Dendritic cell treated with granulocyte-macrophage colony-stimulating factor and Interleukin-4, amounts not matched to agents 40 ng/mL and 50 ng/mL, for 4 days (primary cell): ENCODE measurements at regions of chr9 and their contacts with region 1.

Region 1: DNA sequence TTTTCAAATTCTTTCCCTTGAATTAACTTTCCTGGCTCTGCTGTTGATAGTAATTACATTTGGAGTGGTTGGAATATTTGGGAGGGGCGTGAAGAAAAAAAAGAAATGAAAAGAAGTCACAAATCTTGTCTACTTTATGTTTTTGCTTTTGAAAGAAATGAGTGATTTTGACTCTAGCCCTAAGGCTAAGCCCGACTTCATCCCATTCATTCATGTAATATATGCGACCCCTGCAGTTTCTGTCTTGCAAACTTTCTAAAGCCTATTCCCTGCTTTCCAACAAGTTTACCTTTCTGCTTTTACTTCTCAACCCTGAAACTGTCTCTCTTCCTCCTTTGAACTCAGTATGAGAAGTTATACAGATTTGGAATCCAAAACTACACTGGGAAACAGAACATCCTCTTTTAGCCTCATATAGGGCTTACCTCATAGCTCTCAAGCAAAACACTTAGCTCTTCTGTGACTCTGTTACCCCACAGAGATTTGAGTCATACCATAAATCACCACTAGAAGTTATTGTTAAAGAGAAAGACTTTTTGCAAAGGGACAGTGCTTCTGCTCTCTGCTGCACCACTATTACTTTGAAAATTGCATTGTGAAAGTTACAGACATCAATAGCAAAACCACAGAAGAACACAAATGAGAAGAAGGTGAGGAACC is 1.6 kb downstream of the CFAP95 start:
- H3K4me3 Mint-ChIP-seq: no peak overlapping the region
- H3K27ac Mint-ChIP-seq: no peak overlapping the region
- H3K4me1 Mint-ChIP-seq: peaks cover 31% of the 10 kb centered on the region
- H3K27me3 Mint-ChIP-seq: peaks cover 21% of the 10 kb centered on the region

Region 2: DNA sequence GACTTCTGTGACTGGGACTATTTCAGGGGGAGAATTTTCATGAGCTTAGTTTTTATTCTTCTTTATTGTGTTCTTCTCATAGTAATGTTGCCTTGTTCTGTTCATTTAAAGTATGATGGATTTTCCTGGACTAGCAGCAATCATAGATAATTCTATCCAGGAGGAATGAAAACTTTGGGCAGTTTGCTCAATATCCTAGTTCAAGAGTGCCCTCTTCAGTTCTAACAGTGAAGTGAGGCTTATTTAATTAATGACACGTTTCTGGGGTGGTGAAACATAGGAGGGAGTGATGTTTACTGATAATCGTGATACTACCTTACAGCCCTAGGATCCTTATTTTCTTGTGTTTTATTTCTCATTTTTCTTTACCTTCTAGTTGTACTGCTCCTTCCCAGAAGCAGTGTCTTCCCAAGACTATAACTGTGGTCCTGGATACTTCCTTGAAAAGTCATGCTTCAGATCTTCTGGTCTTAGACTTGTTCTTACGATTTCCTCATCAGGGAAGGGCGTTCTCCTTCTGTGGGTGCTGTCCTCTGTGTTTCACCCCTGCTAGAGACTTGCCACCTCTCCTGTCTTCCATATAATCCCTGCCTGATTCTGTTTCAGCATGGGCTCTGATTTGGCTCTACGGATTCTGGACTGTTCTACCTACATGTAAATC is 55.8 kb after region 1 on chr9:
- intact Hi-C with region 1: loop called (anchors 1 kb)
- H3K4me3 Mint-ChIP-seq: no peak overlapping the region
- H3K27ac Mint-ChIP-seq: no peak overlapping the region
- H3K4me1 Mint-ChIP-seq: peaks cover 6% of the 10 kb centered on the region
- H3K27me3 Mint-ChIP-seq: peaks cover 2% of the 10 kb centered on the region

Region 3: GRCh38 chr9:69919461-69920061 is 97.3 kb after region 1 on chr9:
- intact Hi-C with region 1: loop called (anchors 10 kb)
- H3K4me3 Mint-ChIP-seq: no peak overlapping the region
- H3K27ac Mint-ChIP-seq: no peak overlapping the region
- H3K4me1 Mint-ChIP-seq: peaks cover 12% of the 10 kb centered on the region
- H3K27me3 Mint-ChIP-seq: peaks cover 16% of the 10 kb centered on the region